Panc1 (cell line): ENCODE measurements at regions of chr9 and their contacts with region 1.

Region 1: GRCh38 chr9:91422758-91423711 is 597 bp downstream of the NFIL3 start:
- DNase-seq: no peak
- ATAC-seq: peak; percentile 55
- H3K4me3 ChIP-seq: peak overlapping the region; percentile 77 to 82
- H3K27ac ChIP-seq: peak overlapping the region; percentile 72
- H3K4me1 ChIP-seq: peaks cover 25% of the 10 kb centered on the region
- H3K27me3 ChIP-seq: no peaks in the 10 kb centered on the region
- CTCF ChIP-seq: peak; percentile 27; the same call in 1 of the 2 replicates

Region 2: GRCh38 chr9:91036826-91037510 is 386.1 kb before region 1 on chr9:
- CTCF ChIA-PET with region 1: no interaction called
- POLR2A ChIA-PET with region 1: no interaction called
- in situ Hi-C with region 1: no loop called
- intact Hi-C with region 1: loop called (anchors 2 kb)
- DNase-seq: peak; percentile 42
- ATAC-seq: peak; percentile 96
- H3K4me3 ChIP-seq: peak overlapping the region in 1 of 2 experiments; percentile 34; a peak in 2 of 4 replicates
- H3K27ac ChIP-seq: no peak overlapping the region
- H3K4me1 ChIP-seq: peaks cover 12% of the 10 kb centered on the region
- H3K27me3 ChIP-seq: no peaks in the 10 kb centered on the region
- CTCF ChIP-seq: peak; percentile 71

Region 3: GRCh38 chr9:91291866-91292265 is 131.2 kb before region 1 on chr9:
- CTCF ChIA-PET with region 1: no interaction called
- POLR2A ChIA-PET with region 1: interaction called, 13 read pairs
- in situ Hi-C with region 1: no loop called
- intact Hi-C with region 1: no loop called
- DNase-seq: no peak
- ATAC-seq: no peak
- H3K4me3 ChIP-seq: no peak overlapping the region
- H3K27ac ChIP-seq: no peak overlapping the region
- H3K4me1 ChIP-seq: no peaks in the 10 kb centered on the region
- H3K27me3 ChIP-seq: no peaks in the 10 kb centered on the region
- CTCF ChIP-seq: no peak

Region 4: DNA sequence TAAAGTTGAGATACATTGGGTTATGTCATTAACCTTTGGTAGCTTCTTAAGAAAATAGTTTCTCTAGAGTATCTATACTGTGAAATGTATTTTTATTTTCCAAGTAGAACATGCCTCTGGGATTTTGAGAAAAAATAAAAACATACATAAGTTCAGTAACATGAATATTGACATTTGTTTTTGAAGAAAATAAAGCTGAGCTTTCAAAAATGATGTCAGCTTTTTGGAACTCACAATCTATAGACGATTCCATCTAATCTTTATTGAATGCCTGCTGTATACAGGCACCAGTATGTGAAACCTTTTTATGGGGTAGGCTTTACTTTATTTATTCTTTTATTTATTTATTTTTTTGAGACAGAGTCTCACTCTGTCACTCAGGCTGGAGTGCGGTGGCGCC is 176.5 kb after region 1 on chr9:
- CTCF ChIA-PET with region 1: no interaction called
- POLR2A ChIA-PET with region 1: interaction called, 13 read pairs
- in situ Hi-C with region 1: no loop called
- intact Hi-C with region 1: no loop called
- DNase-seq: no peak
- ATAC-seq: no peak
- H3K4me3 ChIP-seq: no peak overlapping the region
- H3K27ac ChIP-seq: no peak overlapping the region
- H3K4me1 ChIP-seq: no peaks in the 10 kb centered on the region
- H3K27me3 ChIP-seq: no peaks in the 10 kb centered on the region
- CTCF ChIP-seq: no peak